AG04449 (cell line): ENCODE measurements at regions of chr11 and their contacts with region 1.

Region 1: DNA sequence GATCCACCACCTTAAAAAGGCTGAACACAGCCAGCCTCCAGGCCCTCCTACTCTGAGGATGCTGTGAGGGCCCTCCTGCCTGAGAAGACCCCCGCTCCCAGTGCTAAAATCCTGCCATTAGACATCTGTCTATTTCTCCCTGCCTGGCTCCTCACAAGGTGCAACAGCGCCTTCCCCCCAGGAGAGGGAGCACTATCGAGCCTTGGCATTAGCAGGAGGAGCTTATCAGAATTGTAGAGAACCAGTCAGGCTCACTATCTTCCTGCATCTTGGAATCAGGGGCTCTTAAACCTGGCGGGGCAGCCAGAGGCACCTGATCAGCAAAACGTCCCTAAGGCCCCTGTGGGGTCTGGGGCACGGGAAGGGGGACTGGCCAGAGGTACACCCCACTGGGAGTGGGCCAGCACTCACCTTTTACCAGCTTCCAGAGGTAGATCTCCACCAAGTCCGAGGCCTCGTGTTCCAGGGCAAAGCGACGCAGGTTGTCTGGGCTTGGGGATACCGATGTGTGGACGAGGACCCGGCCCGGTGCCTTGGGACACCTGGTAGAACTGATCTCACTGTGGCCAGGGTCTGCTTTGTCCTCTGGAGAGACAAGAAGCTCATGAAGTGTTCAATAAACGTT is 28.7 kb downstream of the CHRDL2 start:
- DNase-seq: no peak
- H3K4me3 ChIP-seq: no peak overlapping the region
- CTCF ChIP-seq: peak; percentile 98

Region 2: DNA sequence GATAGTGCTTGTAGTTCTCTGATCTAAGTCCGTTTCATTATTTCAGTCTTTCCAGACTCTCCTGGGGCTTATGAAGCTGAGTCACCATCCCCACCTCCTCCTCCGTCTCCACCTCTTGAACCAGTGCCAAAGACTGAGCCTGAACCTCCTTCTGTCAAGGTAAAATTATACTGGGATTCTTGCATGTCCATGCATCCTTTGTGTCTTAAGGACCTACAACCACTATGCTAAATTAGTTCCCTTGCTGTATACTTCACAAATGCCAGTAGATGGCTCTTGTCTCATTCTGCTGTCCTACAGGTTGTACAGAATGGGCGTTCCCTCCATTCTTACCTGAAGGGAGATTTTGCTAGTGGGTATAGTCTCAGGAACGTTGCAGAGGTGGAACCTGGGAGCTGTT is 68.0 kb before region 1 on chr11:
- CTCF ChIA-PET with region 1: interaction called, 24 read pairs
- POLR2A ChIA-PET with region 1: no interaction called
- DNase-seq: no peak
- H3K4me3 ChIP-seq: no peak overlapping the region
- CTCF ChIP-seq: peak; percentile 32

Region 3: DNA sequence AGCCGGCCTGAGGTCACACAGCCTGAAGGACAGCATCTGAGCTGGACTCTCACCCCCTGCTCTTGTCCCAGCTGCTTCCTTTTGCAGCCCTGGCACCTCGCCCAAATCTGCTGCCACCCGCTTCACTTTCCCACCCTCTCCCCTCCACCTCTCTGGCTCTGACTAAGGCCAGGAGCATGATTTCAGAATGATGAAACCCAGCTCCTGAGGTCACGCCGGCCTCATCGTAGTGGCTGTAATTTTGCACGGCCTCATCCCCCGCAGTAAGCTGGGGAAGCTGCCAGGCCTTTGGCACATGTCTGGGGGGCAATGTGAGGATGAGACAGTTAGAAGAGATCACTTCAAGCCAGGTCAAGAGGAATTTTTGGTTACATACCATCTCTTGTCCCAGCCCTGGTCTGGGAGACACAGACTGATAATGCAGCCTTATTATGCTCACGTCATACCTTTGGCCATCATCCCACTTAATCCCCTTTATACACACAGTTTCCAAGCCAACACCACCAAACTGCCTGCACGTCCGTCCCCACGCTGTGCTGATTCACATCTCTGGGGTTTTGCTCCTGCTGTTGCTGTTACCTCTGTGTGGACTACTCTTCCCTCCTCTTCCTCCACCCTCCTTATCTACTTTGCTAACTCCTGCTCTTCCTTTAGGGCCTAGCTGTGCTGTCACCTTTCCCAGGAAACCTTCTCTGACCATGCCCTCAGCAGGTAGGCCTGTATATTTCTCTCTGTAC is 29.4 kb before region 1 on chr11:
- CTCF ChIA-PET with region 1: interaction called, 70 read pairs
- POLR2A ChIA-PET with region 1: no interaction called
- DNase-seq: peak; percentile 99
- H3K4me3 ChIP-seq: no peak overlapping the region; the same call in 1 of the 2 replicates
- CTCF ChIP-seq: no peak

Region 4: DNA sequence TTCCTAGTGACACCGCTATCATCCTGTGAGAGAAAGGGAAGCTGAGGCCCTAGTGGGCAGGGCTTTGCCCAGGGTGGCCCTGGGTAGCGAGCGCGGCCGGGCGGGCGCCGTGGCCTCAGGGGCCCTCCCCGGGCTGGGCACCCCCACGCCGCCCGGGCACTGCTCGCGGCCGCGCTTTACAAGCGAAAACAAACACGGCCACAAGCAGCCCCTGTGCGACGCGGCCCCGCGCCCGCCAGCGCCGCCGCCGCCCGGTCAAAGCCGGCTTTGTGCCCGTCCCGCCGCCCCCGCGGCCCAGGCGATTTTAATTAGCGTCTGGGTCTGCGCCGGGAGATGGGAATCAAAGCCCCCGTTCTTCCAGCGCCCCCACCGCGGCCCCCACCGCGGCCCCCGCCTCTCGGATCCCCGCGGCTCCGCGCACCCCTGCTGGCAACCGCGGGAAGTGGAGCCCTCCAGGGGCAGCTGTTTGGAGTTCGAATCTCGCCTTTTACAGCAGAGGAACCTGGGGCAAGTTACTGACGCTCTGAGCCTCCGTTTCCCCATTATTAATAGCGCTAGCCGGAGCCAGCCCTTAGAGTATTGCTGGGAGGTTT is 19.1 kb before region 1 on chr11:
- CTCF ChIA-PET with region 1: interaction called, 119 read pairs
- POLR2A ChIA-PET with region 1: no interaction called
- DNase-seq: no peak
- H3K4me3 ChIP-seq: peak overlapping the region; percentile 25
- CTCF ChIP-seq: peak; percentile 59

Region 5: GRCh38 chr11:74720596-74721478 is 18.3 kb after region 1 on chr11:
- CTCF ChIA-PET with region 1: interaction called, 305 read pairs
- POLR2A ChIA-PET with region 1: no interaction called
- DNase-seq: no peak
- H3K4me3 ChIP-seq: no peak overlapping the region
- CTCF ChIP-seq: no peak

Region 6: DNA sequence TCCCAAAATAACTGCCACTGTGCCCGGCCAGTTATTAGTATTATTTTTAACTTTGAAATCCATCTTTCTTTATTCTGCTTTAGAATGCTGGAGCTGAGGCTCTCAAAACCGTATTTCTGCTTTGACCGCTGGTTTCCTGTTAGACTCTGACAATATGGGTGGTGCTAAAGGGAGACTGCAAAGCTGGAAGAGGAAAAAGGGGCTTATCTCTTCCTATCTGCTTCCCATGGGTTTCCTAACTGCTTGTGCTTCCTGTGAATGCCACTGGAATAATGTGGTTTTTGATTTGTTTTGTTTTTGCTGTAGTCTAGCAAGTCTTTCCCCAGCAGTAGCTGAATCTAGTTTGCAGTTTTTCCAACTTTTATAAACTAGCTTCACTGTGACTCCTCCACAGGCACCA is 202.8 kb after region 1 on chr11:
- CTCF ChIA-PET with region 1: no interaction called
- POLR2A ChIA-PET with region 1: no interaction called
- DNase-seq: no peak
- H3K4me3 ChIP-seq: no peak overlapping the region
- CTCF ChIP-seq: no peak